Gastrocnemius medialis (tissue), 4 donors: ENCODE measurements at regions of chr15 and their contacts with region 1.

Region 1: DNA sequence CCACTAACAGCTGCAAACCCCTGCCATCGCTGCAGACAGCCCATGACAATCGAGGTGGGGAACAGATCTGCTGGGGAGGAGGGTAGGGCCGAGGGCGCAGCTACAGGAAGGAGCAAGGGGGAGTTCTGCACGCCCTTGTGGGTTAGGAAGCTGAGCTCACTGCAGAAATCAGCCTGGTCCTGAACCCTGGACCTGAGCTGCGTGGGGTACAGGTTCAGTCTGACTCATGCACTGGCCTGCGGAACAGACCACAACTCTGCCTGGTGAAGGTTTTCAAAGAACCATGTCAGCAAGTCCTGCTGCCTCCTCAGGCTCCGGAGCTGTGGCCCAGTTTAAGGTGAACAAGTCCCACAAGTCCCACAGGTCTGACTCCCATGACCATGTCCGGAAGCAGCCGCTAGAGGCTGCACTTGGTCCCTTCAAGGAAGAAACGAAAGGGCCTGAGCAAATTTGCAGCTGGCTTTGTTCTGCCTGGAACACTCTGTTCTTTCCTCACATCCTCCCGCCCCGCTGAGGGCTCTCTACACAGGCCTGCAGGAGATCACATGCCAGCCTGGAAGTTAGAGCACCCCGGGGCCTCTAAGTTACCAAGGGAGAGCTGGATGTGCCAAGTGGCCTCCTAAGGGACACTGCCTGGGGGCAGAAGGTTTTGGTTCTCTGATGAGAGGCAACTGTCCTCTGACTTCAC is 49.4 kb upstream of the AKAP13 start:
- DNase-seq: peak; percentile 86 to 93
- ATAC-seq: peak; percentile 99
- H3K4me3 ChIP-seq: no peak overlapping the region
- H3K27ac ChIP-seq: peak overlapping the region; percentile 68 to 82 (median 76)
- H3K4me1 ChIP-seq: peaks cover 20 to 22% of the 10 kb centered on the region in 2 donors
- H3K27me3 ChIP-seq: no peaks in the 10 kb centered on the region
- CTCF ChIP-seq: peak; percentile 75 to 85 (median 76)
- POLR2A ChIP-seq: no peak

Region 2: GRCh38 chr15:85296615-85297402 is 34.2 kb before region 1 on chr15:
- in situ Hi-C with region 1: no loop called
- intact Hi-C with region 1: loop called (anchors 2 kb)
- DNase-seq: peak; percentile 20 to 55
- ATAC-seq: peak; percentile 97 to 99
- H3K4me3 ChIP-seq: peak overlapping the region; percentile 22 to 50 (median 36)
- H3K27ac ChIP-seq: peak overlapping the region in 1 of 4 donors; percentile 24
- H3K4me1 ChIP-seq: no peaks in the 10 kb centered on the region
- H3K27me3 ChIP-seq: no peaks in the 10 kb centered on the region
- CTCF ChIP-seq: peak; percentile 52 to 80 (median 68)
- POLR2A ChIP-seq: no peak

Region 3: DNA sequence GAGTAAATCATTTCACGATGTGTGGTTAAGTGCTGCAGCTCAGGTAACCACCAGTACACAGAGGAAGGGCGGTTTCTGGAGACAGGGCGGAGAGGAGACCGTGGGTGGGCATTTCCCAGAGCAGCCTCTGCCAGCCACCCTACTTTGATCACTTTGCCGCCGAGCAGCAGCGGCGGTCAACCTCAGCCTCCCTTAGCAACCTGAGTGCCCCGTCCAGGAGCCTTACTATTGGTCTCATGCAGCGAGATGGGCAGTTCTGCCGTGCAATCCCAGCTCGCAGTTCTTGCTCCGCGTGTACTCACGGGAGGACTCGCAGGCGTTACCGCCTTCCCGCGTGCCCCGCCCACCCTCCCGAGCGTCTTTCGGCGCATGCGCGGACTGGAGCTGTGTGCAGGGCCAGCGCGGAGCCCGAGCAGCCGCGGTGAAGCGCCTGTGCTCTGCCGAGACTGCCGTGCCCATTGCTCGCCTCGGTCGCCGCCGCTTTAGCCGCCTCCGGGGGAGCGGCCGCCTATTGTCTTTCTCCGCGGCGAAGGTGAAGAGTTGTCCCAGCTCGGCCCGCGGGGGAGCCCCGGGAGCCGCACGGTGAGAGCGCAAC is 49.3 kb after region 1 on chr15 and contains the start of gene AKAP13:
- in situ Hi-C with region 1: no loop called
- intact Hi-C with region 1: loop called (anchors 2 kb)
- DNase-seq: peak; percentile 96 to 98
- ATAC-seq: peak; percentile 93 to 95
- H3K4me3 ChIP-seq: peak within 1 kb of the TSS; percentile 74 to 94 (median 91)
- H3K27ac ChIP-seq: peak within 1 kb of the TSS; percentile 86 to 94 (median 92)
- H3K4me1 ChIP-seq: peaks cover 6 to 11% of the 10 kb centered on the region in 2 donors
- H3K27me3 ChIP-seq: peaks cover 0 to 2% (median 0%) of the 10 kb centered on the region in 3 donors
- CTCF ChIP-seq: no peak
- POLR2A ChIP-seq: peak; percentile 90 to 92
- total RNA-seq, gene AKAP13: 127 to 481 (median 172) TPM

Region 4: GRCh38 chr15:85412956-85413854 is 82.2 kb after region 1 on chr15:
- in situ Hi-C with region 1: loop called in 1 of 4 experiments (anchors 5 kb)
- intact Hi-C with region 1: loop called (anchors 1 kb)
- DNase-seq: peak; percentile 22 to 50
- ATAC-seq: peak; percentile 68
- H3K4me3 ChIP-seq: peak overlapping the region in 2 of 4 donors; percentile 3 to 7
- H3K27ac ChIP-seq: peak overlapping the region; percentile 40 to 66 (median 58)
- H3K4me1 ChIP-seq: peaks cover 18 to 30% of the 10 kb centered on the region in 2 donors
- H3K27me3 ChIP-seq: no peaks in the 10 kb centered on the region
- CTCF ChIP-seq: no peak
- POLR2A ChIP-seq: no peak

Region 5: DNA sequence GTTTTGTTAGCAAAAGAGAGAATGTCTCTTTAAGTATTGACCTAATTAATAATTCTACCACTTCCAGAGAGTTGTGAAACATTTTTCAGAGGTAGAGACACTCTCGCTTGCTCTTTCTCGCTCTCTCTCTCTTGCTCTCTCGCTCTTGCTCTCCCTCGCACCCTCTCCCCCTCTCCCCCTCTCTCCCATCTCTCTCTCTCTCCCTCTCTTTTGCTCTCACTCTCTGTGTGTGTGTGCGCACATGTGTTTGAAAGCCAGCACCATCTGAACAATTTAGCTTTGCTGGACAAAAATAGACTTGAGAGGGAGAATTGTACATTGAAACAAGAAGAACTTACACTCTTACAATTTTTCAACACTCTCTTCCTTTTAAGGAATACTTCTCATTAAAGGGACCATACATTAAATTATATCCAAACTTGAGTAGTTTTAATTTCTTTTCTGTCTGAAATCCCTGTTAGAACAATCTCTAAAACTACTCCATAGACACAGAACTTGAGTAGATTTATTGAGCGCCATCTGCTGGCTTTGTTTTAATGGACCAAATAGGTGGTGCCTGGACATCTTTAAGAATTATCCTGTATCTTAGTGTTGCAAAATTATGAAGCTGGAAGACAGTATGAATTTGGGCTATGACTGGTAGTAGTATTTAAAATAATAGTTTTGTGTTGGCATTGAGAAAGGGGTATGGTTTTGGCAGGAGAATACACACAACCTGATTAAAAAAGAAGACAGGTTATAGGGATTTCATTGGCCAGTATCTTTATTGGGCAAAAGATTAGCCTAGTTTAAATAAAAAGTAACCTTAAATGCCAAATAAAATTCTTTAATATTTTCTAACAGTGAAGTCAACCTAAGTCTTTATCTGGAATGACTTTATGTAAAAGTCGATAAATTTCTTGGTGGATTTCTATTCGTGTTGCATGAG is 174.0 kb after region 1 on chr15:
- in situ Hi-C with region 1: no loop called
- intact Hi-C with region 1: loop called (anchors 1 kb)
- DNase-seq: peak; percentile 6 to 20
- ATAC-seq: peak in 1 of 2 donors; percentile 65
- H3K4me3 ChIP-seq: no peak overlapping the region
- H3K27ac ChIP-seq: peak overlapping the region; percentile 27 to 49 (median 29)
- H3K4me1 ChIP-seq: peaks cover 18 to 23% of the 10 kb centered on the region in 2 donors
- H3K27me3 ChIP-seq: no peaks in the 10 kb centered on the region
- CTCF ChIP-seq: peak in 3 of 5 experiments; percentile 40 to 58 (median 53)
- POLR2A ChIP-seq: no peak

Region 6: DNA sequence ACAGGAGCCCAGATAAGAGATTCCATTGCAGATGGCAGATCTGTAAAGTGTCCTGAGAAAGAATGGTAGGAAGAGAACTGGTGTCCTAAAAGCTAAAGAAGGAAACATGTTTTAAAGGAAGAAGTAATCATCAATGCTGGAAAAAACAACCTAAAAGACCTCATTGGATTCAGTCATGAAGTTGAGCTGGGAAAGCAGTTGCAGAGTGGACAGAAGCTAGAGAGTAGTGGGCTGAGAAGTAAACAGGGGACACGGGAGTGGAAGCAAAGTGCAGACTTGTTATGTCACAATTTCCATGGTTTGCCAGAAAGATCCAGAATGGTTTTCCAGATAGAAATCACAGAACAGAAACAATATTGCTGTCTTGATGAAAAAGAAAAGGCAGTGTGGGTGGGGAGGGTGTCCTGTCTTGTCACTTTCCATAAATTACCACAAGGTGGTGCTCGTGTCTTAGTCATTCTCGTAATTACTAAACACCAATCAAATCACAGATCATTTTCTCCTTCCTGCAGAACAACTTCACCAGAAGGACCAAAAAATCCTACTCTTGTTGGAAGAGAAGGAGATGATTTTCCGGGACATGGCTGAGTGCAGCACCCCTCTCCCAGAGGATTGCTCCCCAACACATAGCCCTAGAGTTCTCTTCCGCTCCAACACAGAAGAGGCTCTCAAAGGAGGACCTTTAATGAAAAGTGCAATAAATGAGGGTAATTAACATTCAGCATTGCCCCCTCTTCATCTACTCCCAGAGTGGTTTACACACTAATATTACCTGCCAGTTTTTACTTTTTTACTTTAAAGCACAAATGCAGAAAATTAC is 399.2 kb after region 1 on chr15:
- in situ Hi-C with region 1: no loop called
- intact Hi-C with region 1: loop called (anchors 10 kb)
- DNase-seq: no peak
- ATAC-seq: peak; percentile 45 to 65
- H3K4me3 ChIP-seq: no peak overlapping the region
- H3K27ac ChIP-seq: peak overlapping the region; percentile 53 to 82 (median 63)
- H3K4me1 ChIP-seq: peaks cover 4 to 9% of the 10 kb centered on the region in 2 donors
- H3K27me3 ChIP-seq: no peaks in the 10 kb centered on the region
- CTCF ChIP-seq: peak; percentile 73 to 82 (median 76)
- POLR2A ChIP-seq: no peak